ENCODE measurements at regions of chr2 and their contacts with region 1.

Region 1: GRCh38 chr2:230347659-230348305 is 20.8 kb downstream of the SP140L start:
- DNase-seq: peak; percentile 76
- H3K4me3 Mint-ChIP-seq: no peak overlapping the region
- H3K27ac Mint-ChIP-seq: peak overlapping the region; percentile 85
- H3K4me1 Mint-ChIP-seq: peaks cover 71% of the 10 kb centered on the region
- H3K27me3 Mint-ChIP-seq: no peaks in the 10 kb centered on the region

Region 2: GRCh38 chr2:230209422-230210051 is 138.2 kb before region 1 on chr2:
- CTCF ChIA-PET with region 1: no interaction called
- intact Hi-C with region 1: no loop called
- DNase-seq: no peak
- H3K4me3 Mint-ChIP-seq: no peak overlapping the region
- H3K27ac Mint-ChIP-seq: no peak overlapping the region
- H3K4me1 Mint-ChIP-seq: peaks cover 11% of the 10 kb centered on the region
- H3K27me3 Mint-ChIP-seq: no peaks in the 10 kb centered on the region

Region 3: GRCh38 chr2:230326453-230327417 is 21.0 kb before region 1 on chr2 and contains the start of gene SP140L:
- CTCF ChIA-PET with region 1: no interaction called
- intact Hi-C with region 1: loop called (anchors 2 kb)
- DNase-seq: peak; percentile 88
- H3K4me3 Mint-ChIP-seq: peak within 1 kb of the TSS; percentile 96
- H3K27ac Mint-ChIP-seq: peak within 1 kb of the TSS; percentile 99
- H3K4me1 Mint-ChIP-seq: peaks cover 60% of the 10 kb centered on the region
- H3K27me3 Mint-ChIP-seq: no peaks in the 10 kb centered on the region
- total RNA-seq, gene SP140L: 41.8 to 44.7 TPM

Region 4: GRCh38 chr2:230335864-230336506 is 11.8 kb before region 1 on chr2:
- CTCF ChIA-PET with region 1: no interaction called
- intact Hi-C with region 1: loop called (anchors 1 kb)
- DNase-seq: peak; percentile 40
- H3K4me3 Mint-ChIP-seq: peak overlapping the region; percentile 64
- H3K27ac Mint-ChIP-seq: peak overlapping the region; percentile 86
- H3K4me1 Mint-ChIP-seq: peaks cover 58% of the 10 kb centered on the region
- H3K27me3 Mint-ChIP-seq: no peaks in the 10 kb centered on the region

Region 5: GRCh38 chr2:230582851-230583283 is 235.1 kb after region 1 on chr2:
- CTCF ChIA-PET with region 1: no interaction called
- intact Hi-C with region 1: no loop called
- DNase-seq: peak; percentile 58
- H3K4me3 Mint-ChIP-seq: no peak overlapping the region
- H3K27ac Mint-ChIP-seq: peak overlapping the region; percentile 38
- H3K4me1 Mint-ChIP-seq: peaks cover 23% of the 10 kb centered on the region
- H3K27me3 Mint-ChIP-seq: no peaks in the 10 kb centered on the region

Measured in activated naive CD4-positive, alpha-beta T cell treated with anti-CD3 and anti-CD28 coated beads for 36 hours (primary cell).